PC-9 (cell line): ENCODE measurements at regions of chr11 and their contacts with region 1.

Region 1: DNA sequence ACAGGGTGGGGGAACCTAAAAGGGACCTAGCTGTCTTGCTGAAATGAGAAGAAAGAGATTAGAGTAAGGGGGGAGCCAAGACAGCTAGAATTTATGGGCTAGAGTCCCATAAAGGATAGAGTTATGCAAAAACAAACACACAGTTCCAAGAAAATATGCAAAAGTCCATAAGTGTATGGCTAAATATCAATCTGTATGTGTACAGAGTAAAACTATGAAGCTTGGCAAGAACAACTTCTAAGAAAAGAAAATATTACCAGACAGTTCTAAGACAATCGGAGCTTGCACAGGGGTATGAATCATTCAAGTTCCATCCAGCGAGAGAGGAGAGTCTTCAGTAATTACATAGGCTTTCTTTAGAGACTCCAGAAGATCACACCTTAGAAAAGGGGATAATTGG is 41.8 kb downstream of the GDPD4 start:
- DNase-seq: no peak
- H3K4me3 ChIP-seq: no peak overlapping the region
- H3K27ac ChIP-seq: no peak overlapping the region
- H3K4me1 ChIP-seq: no peaks in the 10 kb centered on the region
- H3K27me3 ChIP-seq: no peaks in the 10 kb centered on the region
- CTCF ChIP-seq: no peak

Region 2: DNA sequence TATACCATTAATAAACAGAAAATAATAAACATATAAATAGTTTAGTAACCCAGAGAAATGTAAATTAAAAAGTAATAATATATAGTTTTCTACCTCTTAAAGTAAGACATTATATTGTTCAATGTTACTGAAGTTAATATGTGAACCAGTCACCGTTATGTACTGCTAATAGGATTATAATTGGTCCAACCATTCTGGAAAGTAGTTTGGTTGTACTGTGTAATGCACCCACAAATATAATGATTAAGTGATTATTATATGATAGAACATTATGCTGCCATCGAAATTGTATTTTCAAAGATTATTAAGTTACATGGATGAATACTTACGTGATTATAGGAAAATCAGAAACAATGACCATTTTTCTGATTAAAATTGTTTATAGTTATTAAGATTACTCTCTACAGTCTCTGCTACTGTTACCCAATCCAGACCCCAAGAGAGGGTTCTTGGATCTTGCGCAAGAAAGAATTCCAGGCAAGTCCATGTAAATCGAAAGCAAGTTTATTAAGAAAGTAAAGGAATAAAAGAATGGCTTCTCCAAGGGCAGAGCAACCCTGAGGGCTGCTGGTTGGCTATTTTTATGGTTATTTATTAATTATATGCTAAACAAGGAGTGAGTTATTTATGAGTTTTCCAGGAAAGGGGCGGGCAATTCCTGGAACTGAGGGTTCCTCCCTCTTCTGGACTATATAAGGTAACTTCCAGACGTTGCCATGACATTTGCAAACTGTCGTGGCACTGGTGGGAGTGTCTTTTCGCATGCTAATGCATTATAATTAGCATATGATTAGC is 348.8 kb before region 1 on chr11:
- CTCF ChIA-PET with region 1: no interaction called
- POLR2A ChIA-PET with region 1: no interaction called
- intact Hi-C with region 1: no loop called
- DNase-seq: no peak
- H3K4me3 ChIP-seq: no peak overlapping the region
- H3K27ac ChIP-seq: no peak overlapping the region
- H3K4me1 ChIP-seq: no peaks in the 10 kb centered on the region
- H3K27me3 ChIP-seq: no peaks in the 10 kb centered on the region
- CTCF ChIP-seq: no peak

Region 3: GRCh38 chr11:77236901-77237300 is 22.7 kb before region 1 on chr11:
- CTCF ChIA-PET with region 1: no interaction called
- POLR2A ChIA-PET with region 1: no interaction called
- intact Hi-C with region 1: loop called (anchors 2 kb)
- DNase-seq: no peak
- H3K4me3 ChIP-seq: no peak overlapping the region
- H3K27ac ChIP-seq: no peak overlapping the region
- H3K4me1 ChIP-seq: no peaks in the 10 kb centered on the region
- H3K27me3 ChIP-seq: no peaks in the 10 kb centered on the region
- CTCF ChIP-seq: no peak

Region 4: DNA sequence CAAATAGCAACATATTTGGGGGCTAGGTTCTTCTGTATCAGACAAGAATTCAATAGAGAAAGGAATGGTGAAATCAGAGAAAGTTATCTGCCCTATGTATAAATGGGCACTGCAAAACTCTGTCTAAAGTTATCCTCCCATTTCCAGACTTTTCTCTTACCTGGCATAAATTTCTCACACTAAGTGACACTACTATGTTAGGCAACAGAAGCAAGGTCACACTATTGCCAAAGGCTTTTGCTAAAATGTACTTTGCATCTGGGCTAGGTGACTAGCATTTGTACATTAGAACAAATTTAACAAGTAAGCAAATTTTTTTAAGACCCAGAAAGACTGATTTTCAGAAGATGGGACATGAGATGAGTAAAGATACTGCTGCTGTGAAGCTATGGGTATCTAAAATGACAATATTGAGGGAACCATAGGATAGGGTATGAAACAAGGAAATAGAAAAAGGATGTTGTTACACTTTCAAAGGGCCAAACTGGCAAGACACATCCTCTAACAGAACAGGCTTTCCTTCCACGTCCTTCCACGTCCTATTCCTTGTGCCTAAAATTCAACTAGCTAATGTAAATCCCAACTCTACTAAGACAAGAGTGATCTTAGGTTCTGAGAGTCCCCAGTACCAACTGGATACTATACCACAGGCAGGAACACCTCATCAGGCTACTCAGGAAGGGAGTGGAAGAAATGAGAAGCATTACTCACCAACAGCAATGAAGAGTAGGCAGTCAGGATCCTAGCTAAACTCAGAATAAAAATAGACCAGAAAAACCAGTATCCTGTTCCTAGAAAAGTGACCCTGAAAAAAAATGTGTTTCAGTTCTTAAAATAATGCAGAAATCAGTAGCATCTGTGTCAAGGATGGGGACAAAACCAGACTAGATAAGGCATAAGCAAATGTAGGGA is 19.2 kb after region 1 on chr11:
- CTCF ChIA-PET with region 1: no interaction called
- POLR2A ChIA-PET with region 1: interaction called, 14 read pairs
- intact Hi-C with region 1: no loop called
- DNase-seq: no peak
- H3K4me3 ChIP-seq: no peak overlapping the region
- H3K27ac ChIP-seq: no peak overlapping the region
- H3K4me1 ChIP-seq: peaks cover 11% of the 10 kb centered on the region
- H3K27me3 ChIP-seq: no peaks in the 10 kb centered on the region
- CTCF ChIP-seq: no peak